T-cell (primary cell): ENCODE measurements at regions of chr10 and their contacts with region 1.

Region 1: DNA sequence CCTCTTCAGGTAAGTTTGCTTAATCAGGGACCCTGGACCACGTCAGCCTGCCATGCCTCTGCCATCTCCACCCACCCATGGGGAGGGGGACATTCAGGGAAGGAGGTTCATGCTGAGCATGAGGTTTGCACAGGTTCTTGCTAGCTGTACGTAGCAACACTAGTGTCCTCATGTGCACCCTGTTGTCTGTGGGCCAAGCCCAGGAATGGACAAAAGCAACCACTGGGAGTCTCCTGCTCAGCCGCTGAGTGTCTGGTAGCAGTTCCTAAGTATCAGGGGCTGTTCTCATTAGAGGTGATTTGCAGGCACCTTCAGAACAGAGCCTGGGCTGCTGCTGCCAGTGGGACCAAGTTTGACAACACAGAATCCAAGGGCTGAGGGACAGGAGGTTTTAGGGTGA is 17.9 kb downstream of the CASP7 start:
- DNase-seq: no peak
- ATAC-seq: no peak
- H3K4me3 ChIP-seq: no peak overlapping the region
- H3K4me3 Mint-ChIP-seq: no peak overlapping the region
- H3K27ac ChIP-seq: no peak overlapping the region
- H3K27ac Mint-ChIP-seq: no peak overlapping the region
- H3K4me1 ChIP-seq: no peaks in the 10 kb centered on the region
- H3K4me1 Mint-ChIP-seq: peaks cover 2 to 8% (median 7%) of the 10 kb centered on the region in 3 donors
- H3K27me3 ChIP-seq: no peaks in the 10 kb centered on the region
- H3K27me3 Mint-ChIP-seq: no peaks in the 10 kb centered on the region

Region 2: DNA sequence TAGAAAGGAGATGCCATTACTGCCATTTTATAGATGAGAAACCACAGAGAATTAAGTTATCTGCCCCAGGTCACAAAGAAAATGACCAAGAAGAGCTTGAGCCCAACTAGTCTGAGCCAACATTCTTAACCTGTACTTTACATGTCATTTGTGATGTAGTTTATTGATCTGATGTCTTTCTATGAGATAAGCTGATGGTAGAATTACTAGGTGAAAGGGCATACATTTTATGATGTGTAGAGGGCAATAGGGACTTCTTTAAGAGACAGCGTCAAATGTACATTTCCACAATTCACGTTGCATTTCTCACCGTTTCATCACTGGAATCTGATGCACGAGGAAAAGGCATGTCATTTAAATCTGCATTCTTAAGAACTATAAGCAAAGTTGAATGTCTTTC is 1312.4 kb before region 1 on chr10:
- CTCF ChIA-PET with region 1: interaction called in 1 of 2 experiments, 12 read pairs
- POLR2A ChIA-PET with region 1: no interaction called
- DNase-seq: no peak
- ATAC-seq: no peak
- H3K4me3 ChIP-seq: no peak overlapping the region
- H3K4me3 Mint-ChIP-seq: no peak overlapping the region
- H3K27ac ChIP-seq: peak overlapping the region; percentile 12
- H3K27ac Mint-ChIP-seq: no peak overlapping the region
- H3K4me1 ChIP-seq: peaks cover 0 to 25% of the 10 kb centered on the region in 2 experiments
- H3K4me1 Mint-ChIP-seq: peaks cover 85 to 90% (median 90%) of the 10 kb centered on the region in 3 donors
- H3K27me3 ChIP-seq: no peaks in the 10 kb centered on the region
- H3K27me3 Mint-ChIP-seq: no peaks in the 10 kb centered on the region

Region 3: GRCh38 chr10:113610631-113611585 is 86.7 kb before region 1 on chr10:
- CTCF ChIA-PET with region 1: no interaction called
- POLR2A ChIA-PET with region 1: no interaction called
- DNase-seq: no peak
- ATAC-seq: no peak
- H3K4me3 ChIP-seq: no peak overlapping the region
- H3K4me3 Mint-ChIP-seq: no peak overlapping the region
- H3K27ac ChIP-seq: no peak overlapping the region
- H3K27ac Mint-ChIP-seq: no peak overlapping the region
- H3K4me1 ChIP-seq: no peaks in the 10 kb centered on the region
- H3K4me1 Mint-ChIP-seq: no peaks in the 10 kb centered on the region
- H3K27me3 ChIP-seq: peaks cover 0 to 14% of the 10 kb centered on the region in 2 experiments
- H3K27me3 Mint-ChIP-seq: peaks cover 22 to 33% of the 10 kb centered on the region in 2 donors

Region 4: GRCh38 chr10:113709221-113709838 is 11.7 kb after region 1 on chr10:
- CTCF ChIA-PET with region 1: no interaction called
- POLR2A ChIA-PET with region 1: no interaction called
- DNase-seq: no peak
- ATAC-seq: peak in 1 of 4 experiments; percentile 19
- H3K4me3 ChIP-seq: no peak overlapping the region
- H3K4me3 Mint-ChIP-seq: peak overlapping the region in 1 of 3 donors; percentile 12
- H3K27ac ChIP-seq: no peak overlapping the region
- H3K27ac Mint-ChIP-seq: no peak overlapping the region
- H3K4me1 ChIP-seq: peaks cover 4 to 5% of the 10 kb centered on the region in 2 experiments
- H3K4me1 Mint-ChIP-seq: peaks cover 40 to 44% (median 44%) of the 10 kb centered on the region in 3 donors
- H3K27me3 ChIP-seq: no peaks in the 10 kb centered on the region
- H3K27me3 Mint-ChIP-seq: no peaks in the 10 kb centered on the region

Region 5: GRCh38 chr10:114879093-114879492 is 1181.5 kb after region 1 on chr10:
- CTCF ChIA-PET with region 1: no interaction called
- POLR2A ChIA-PET with region 1: interaction called in 1 of 2 experiments, 10 read pairs
- DNase-seq: no peak
- ATAC-seq: no peak
- H3K4me3 ChIP-seq: no peak overlapping the region
- H3K4me3 Mint-ChIP-seq: no peak overlapping the region
- H3K27ac ChIP-seq: no peak overlapping the region
- H3K27ac Mint-ChIP-seq: no peak overlapping the region
- H3K4me1 ChIP-seq: peaks cover 3 to 7% of the 10 kb centered on the region in 2 experiments
- H3K4me1 Mint-ChIP-seq: peaks cover 11 to 33% (median 15%) of the 10 kb centered on the region in 3 donors
- H3K27me3 ChIP-seq: peaks cover 0 to 24% of the 10 kb centered on the region in 2 experiments
- H3K27me3 Mint-ChIP-seq: peaks cover 34 to 43% of the 10 kb centered on the region in 2 donors